HepG2 (cell line): ENCODE measurements at regions of chr9 and their contacts with region 1.

Region 1: DNA sequence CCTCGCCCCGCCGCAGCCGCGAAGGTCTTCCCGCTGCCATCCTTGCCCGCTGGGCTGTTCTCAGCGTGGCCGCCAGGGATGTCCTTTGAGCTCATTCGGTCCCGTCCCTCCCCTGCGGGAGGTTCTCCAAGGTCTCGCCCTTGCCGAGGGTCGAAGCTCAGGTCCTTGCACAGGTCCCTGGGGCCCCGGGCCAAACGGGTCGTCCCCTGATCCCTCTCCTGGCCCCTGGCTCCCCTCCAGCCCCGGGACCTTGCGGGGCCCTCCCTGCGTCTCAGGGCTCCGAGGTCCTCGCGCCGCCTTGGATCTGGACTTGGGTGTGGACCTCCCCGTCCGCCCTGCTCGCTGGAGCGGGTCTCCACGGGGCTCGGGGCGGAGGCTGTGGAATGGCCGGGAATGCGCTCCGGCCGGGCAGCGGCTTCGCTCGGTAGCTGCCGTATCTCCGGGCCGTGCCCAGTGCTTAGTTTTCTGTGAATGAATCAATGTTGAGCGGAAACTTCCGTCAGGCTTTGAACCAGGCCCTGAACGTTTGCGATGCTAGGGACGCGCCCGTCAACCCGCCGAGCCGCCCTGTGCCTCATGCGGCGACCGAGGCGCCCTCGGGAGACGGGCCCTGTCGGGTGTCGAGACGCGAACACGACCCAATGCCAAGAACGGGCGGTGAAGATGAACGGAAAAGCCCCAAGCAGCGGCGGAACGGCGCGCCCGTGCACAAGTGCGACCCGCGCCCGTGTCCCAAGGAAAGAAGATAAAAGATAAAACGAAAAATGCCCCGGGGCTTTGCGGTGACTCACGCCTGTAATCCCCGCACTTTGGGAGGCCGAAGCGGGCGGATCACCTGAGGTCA is 789 bp downstream of the RNU6ATAC start:
- DNase-seq: no peak
- ATAC-seq: peak; percentile 2; the same call in 1 of the 3 replicates
- H3K4me3 ChIP-seq: no peak overlapping the region
- H3K27ac ChIP-seq: no peak overlapping the region
- H3K4me1 ChIP-seq: no peaks in the 10 kb centered on the region; the same call in 1 of the 2 replicates
- H3K27me3 ChIP-seq: no peaks in the 10 kb centered on the region
- CTCF ChIP-seq: no peak
- EP300 ChIP-seq: no peak
- POLR2A ChIP-seq: no peak
- RAD21 ChIP-seq: no peak

Region 2: DNA sequence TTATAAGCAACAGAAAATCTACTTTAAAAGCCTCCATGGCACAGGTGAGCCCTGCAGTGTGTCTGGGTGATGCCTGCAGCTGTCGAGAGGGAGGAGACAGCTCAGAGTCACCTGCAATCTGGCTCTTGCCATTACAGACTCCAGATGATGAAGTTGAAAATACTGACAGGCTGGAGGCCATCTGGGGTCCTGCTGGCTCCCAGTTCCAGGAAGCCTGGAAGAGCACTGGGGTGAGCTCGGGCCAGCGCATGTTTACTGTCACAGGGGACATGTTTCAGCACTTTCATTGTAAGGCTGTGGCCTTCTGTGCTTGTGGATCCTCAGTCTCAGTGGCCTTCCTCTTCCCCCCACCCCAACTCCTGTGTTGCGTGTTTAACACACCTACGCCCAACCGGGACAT is 1073.4 kb before region 1 on chr9:
- CTCF ChIA-PET with region 1: no interaction called
- POLR2A ChIA-PET with region 1: no interaction called
- in situ Hi-C with region 1: no loop called
- intact Hi-C with region 1: loop called (anchors 5 kb)
- DNase-seq: no peak
- ATAC-seq: no peak
- H3K4me3 ChIP-seq: no peak overlapping the region
- H3K27ac ChIP-seq: no peak overlapping the region
- H3K4me1 ChIP-seq: no peaks in the 10 kb centered on the region
- H3K27me3 ChIP-seq: peaks cover 0 to 15% of the 10 kb centered on the region in 2 experiments; a peak in 2 of 5 replicates
- CTCF ChIP-seq: no peak
- EP300 ChIP-seq: no peak
- POLR2A ChIP-seq: no peak
- RAD21 ChIP-seq: no peak

Region 3: GRCh38 chr9:134443168-134444037 is 279.8 kb after region 1 on chr9:
- CTCF ChIA-PET with region 1: no interaction called
- POLR2A ChIA-PET with region 1: no interaction called
- in situ Hi-C with region 1: loop called (anchors 5 kb)
- intact Hi-C with region 1: no loop called
- DNase-seq: peak; percentile 71
- ATAC-seq: peak; percentile 74
- H3K4me3 ChIP-seq: no peak overlapping the region; a peak in 1 of 6 replicates
- H3K27ac ChIP-seq: no peak overlapping the region
- H3K4me1 ChIP-seq: peaks cover 53% of the 10 kb centered on the region
- H3K27me3 ChIP-seq: peaks cover 0 to 17% of the 10 kb centered on the region in 2 experiments; a peak in 2 of 5 replicates
- CTCF ChIP-seq: peak; percentile 99
- EP300 ChIP-seq: no peak
- POLR2A ChIP-seq: no peak
- RAD21 ChIP-seq: peak; percentile 97